Heart left ventricle (tissue), 16 donors: ENCODE measurements at regions of chr16 and their contacts with region 1.

Region 1: GRCh38 chr16:12573730-12574383 is 229.8 kb downstream of the CPPED1 start:
- DNase-seq: peak in 2 of 5 donors; percentile 21 to 36
- ATAC-seq: peak in 1 of 4 donors; percentile 39
- H3K4me3 ChIP-seq: no peak overlapping the region
- H3K27ac ChIP-seq: no peak overlapping the region
- H3K4me1 ChIP-seq: peaks cover 0 to 13% (median 0%) of the 10 kb centered on the region in 12 donors
- H3K27me3 ChIP-seq: no peaks in the 10 kb centered on the region
- CTCF ChIP-seq: peak; percentile 25 to 68 (median 48)
- POLR2A ChIP-seq: no peak

Region 2: DNA sequence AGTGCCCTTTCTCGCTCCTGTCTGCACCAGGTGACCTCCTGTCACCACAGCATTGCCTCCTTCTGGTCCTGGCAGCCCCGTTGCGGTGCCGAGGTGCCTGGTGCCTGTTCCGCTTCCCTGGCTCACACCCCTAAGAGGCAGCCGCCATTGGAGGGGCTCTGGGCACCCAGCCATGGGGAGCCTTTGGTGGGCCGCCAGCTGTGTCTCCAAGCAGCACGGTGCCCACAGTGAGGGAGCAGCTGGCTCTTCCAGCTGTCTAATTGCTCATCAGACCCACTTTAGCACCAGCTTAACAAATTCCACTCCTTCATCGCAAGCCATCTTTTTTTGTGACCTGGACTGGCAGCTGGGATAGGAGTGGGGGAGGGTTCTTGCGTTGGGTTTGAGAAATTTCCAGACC is 321.2 kb before region 1 on chr16:
- intact Hi-C with region 1: no loop called
- DNase-seq: peak in 1 of 5 donors; percentile 38
- ATAC-seq: peak in 1 of 4 donors; percentile 56
- H3K4me3 ChIP-seq: no peak overlapping the region
- H3K27ac ChIP-seq: no peak overlapping the region
- H3K4me1 ChIP-seq: peaks cover 0 to 3% (median 0%) of the 10 kb centered on the region in 12 donors
- H3K27me3 ChIP-seq: no peaks in the 10 kb centered on the region
- CTCF ChIP-seq: no peak
- POLR2A ChIP-seq: no peak

Region 3: DNA sequence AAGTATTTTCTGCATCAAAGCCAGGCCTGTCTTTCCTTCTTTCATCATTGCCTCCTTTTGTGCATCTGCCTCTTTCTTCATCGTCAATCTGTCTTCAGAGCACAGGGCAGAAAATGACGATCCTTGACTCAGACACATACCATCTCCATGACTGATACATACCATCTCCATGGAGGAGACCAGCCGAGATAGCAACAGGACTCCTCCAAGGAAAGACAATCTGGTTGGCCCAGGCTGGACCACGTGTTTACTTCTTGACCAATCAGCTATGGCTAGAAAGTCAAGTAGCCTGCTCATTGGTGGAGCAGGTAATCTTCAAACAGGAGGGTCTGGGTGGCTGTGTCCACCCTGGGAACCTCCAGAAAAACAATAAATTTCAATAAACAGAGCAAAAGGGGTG is 65.2 kb after region 1 on chr16:
- intact Hi-C with region 1: loop called in 1 of 10 experiments (anchors 10 kb)
- DNase-seq: no peak
- ATAC-seq: no peak
- H3K4me3 ChIP-seq: no peak overlapping the region
- H3K27ac ChIP-seq: no peak overlapping the region
- H3K4me1 ChIP-seq: no peaks in the 10 kb centered on the region
- H3K27me3 ChIP-seq: no peaks in the 10 kb centered on the region
- CTCF ChIP-seq: no peak
- POLR2A ChIP-seq: no peak

Region 4: DNA sequence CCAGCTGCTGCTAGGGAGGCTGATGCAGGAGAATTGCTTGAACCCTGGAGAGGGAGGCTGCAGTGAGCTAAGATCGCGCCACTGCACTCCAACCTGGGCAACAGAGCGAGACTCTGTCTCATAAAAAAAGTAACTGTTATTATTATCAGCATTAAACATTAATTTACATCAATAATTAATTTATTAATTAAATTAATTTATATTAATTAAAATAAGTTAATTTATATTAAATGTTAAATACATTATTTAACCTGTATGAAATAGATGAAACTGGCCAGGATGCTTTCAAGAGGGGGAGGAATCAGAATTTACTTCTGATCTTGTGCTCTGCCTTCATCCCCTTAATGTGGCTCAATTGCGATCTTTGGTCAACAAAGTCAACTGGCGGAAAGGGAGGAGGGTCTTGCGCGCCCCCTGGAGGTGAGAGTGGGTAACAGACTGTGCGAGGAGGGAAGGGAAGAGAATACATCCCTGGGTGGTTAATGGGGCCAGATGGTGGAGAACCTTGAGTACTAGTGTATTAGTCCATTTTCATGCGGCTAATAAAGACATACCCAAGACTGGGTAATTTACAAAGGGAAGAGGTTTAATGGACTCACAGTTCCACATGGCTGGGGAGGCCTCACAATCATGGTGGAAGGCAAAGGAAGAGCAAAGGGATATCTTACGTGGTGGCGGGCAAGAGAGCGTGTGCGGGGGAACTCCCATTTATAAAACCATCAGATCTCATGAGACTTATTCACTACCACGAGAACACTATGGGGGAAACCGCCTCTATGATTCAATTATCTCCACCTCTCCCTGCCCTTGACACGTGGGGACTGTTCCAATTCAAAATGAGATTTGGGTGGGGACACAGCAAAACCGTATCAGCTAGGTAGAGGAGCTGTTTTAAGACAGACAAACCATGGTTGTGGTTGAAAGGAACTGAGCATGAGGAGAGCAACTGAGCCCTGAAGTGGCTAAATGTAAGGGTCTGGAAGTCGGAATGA is 245.6 kb after region 1 on chr16:
- intact Hi-C with region 1: loop called in 5 of 10 experiments (anchors 5 to 10 kb)
- DNase-seq: peak; percentile 47 to 81 (median 58)
- ATAC-seq: peak in 3 of 4 donors; percentile 59 to 69 (median 69)
- H3K4me3 ChIP-seq: no peak overlapping the region
- H3K27ac ChIP-seq: no peak overlapping the region
- H3K4me1 ChIP-seq: peaks cover 0 to 21% (median 0%) of the 10 kb centered on the region in 12 donors
- H3K27me3 ChIP-seq: peaks cover 0 to 5% (median 0%) of the 10 kb centered on the region in 9 donors
- CTCF ChIP-seq: peak; percentile 70 to 89 (median 80)
- POLR2A ChIP-seq: no peak

Region 5: DNA sequence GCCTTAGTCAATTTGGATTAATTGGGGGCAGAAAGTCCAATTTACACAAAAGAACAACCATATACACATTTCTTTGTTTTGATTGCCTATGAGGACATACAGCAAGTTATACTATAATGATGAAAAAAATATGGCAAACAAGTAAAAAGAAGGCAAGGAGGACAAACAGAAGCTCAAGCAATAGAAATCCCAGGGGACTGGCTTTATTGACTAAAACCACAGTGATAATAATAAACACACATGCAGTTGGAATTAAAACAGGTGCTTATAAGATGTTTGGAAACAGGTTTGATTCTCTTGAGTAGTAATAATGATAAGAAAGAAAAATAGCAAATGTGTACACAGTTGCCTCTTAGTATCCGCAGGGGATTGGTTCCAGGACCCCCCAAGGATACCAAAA is 504.0 kb after region 1 on chr16:
- intact Hi-C with region 1: no loop called
- DNase-seq: no peak
- ATAC-seq: no peak
- H3K4me3 ChIP-seq: no peak overlapping the region
- H3K27ac ChIP-seq: no peak overlapping the region
- H3K4me1 ChIP-seq: no peaks in the 10 kb centered on the region
- H3K27me3 ChIP-seq: peaks cover 0 to 38% (median 0%) of the 10 kb centered on the region in 9 donors
- CTCF ChIP-seq: no peak
- POLR2A ChIP-seq: no peak